ENCODE measurements at regions of chr1 and their contacts with region 1.

Region 1: GRCh38 chr1:155308493-155309422 is at the start of gene FDPS:
- DNase-seq: peak; percentile 99
- H3K4me3 Mint-ChIP-seq: peak within 1 kb of the TSS; percentile 96
- H3K27ac Mint-ChIP-seq: peak within 1 kb of the TSS; percentile 99
- H3K4me1 Mint-ChIP-seq: peaks cover 35% of the 10 kb centered on the region
- H3K27me3 Mint-ChIP-seq: no peaks in the 10 kb centered on the region
- total RNA-seq, gene FDPS: 332 to 333 TPM

Region 2: GRCh38 chr1:155172732-155173477 is 135.9 kb before region 1 on chr1 and contains the start of gene KRTCAP2:
- CTCF ChIA-PET with region 1: no interaction called
- intact Hi-C with region 1: loop called (anchors 5 kb)
- DNase-seq: peak; percentile 98
- H3K4me3 Mint-ChIP-seq: peak within 1 kb of the TSS; percentile 93
- H3K27ac Mint-ChIP-seq: peak within 1 kb of the TSS; percentile 97
- H3K4me1 Mint-ChIP-seq: peaks cover 46% of the 10 kb centered on the region
- H3K27me3 Mint-ChIP-seq: no peaks in the 10 kb centered on the region
- total RNA-seq, gene KRTCAP2: 129 to 137 TPM

Region 3: DNA sequence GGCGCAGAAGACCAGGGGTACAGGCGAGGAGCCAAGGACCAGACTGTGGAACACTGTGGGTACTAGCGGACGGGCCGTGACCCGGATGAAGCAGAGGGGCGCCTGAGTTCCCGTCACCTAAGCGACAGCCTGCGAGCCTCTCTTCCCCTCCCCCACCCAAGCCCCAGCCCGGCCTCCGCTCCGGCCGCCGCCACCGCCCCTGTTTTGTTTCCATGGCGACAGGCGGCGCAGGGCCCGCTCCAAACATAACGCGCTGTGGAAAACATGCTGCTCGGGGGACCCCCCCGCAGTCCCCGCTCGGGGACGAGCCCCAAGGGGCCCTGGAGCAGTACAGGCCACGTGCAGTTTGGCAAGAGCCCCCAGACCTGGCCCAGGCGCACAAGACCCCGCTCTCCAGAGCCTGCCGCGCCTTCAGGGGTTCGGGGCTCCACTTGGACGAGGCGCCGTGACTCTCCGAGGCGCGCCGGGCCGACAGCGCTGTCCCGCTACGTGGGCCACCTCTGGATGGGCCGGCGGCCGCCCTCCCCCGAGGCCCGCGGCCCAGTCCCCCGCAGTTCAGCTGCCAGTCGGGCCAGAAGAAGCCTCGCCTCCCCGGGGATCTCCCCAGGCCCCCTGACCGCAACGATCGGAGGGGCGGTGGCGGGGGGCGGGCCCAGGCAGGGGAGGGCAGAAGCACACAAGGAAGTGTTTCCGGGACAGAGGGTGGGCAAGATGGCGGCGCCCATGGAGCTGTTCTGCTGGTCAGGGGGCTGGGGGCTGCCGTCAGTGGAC is 100.0 kb before region 1 on chr1 and contains the start of gene MTX1:
- CTCF ChIA-PET with region 1: interaction called, 4 read pairs
- intact Hi-C with region 1: loop called (anchors 2 kb)
- DNase-seq: peak; percentile 89
- H3K4me3 Mint-ChIP-seq: peak within 1 kb of the TSS; percentile 88
- H3K27ac Mint-ChIP-seq: peak within 1 kb of the TSS; percentile 71
- H3K4me1 Mint-ChIP-seq: peaks cover 29% of the 10 kb centered on the region
- H3K27me3 Mint-ChIP-seq: no peaks in the 10 kb centered on the region
- total RNA-seq, gene MTX1: 46.8 to 47.4 TPM

Region 4: DNA sequence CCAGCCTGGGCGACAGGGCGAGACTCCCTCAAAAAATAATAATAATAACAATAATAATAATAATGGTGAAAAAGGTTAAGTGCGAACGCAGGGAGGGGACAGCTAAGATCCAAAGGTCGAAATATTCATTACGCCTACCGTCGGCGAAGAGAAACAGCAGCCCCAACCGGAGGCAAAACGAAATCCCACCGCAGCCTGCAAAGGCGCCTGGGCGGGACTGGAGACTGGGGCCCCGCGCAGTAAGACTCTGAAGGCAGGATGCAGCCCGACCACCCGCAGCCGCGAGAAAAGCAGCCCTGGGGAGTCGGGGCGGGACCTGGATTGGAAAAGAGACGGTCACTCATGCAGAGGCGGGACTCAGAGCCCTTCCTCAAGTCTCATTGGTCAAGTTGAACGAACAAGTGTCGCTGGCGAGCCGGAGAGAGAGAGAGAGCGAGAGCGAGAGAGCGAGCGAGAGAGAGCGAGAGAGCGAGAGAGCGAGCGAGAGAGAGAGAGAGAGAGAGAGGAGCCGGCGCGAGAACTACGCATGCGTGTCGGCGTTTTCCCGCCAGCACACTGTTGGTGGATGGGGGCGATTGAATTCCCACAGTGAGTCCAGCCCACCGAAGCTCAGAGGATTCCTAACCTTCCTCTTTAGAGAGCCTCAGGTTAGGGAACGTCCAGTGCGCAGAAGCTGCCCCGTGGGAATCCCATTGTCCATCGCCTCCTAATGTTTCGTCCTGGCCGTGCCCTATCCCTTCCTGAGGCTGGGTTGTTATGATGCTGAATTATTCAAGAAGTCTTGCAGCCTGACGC is 64.2 kb before region 1 on chr1:
- CTCF ChIA-PET with region 1: interaction called, 12 read pairs
- intact Hi-C with region 1: loop called (anchors 1 kb)
- DNase-seq: peak; percentile 99
- H3K4me3 Mint-ChIP-seq: peak overlapping the region; percentile 88
- H3K27ac Mint-ChIP-seq: peak overlapping the region; percentile 98
- H3K4me1 Mint-ChIP-seq: peaks cover 40% of the 10 kb centered on the region
- H3K27me3 Mint-ChIP-seq: peaks cover 2% of the 10 kb centered on the region

Region 5: DNA sequence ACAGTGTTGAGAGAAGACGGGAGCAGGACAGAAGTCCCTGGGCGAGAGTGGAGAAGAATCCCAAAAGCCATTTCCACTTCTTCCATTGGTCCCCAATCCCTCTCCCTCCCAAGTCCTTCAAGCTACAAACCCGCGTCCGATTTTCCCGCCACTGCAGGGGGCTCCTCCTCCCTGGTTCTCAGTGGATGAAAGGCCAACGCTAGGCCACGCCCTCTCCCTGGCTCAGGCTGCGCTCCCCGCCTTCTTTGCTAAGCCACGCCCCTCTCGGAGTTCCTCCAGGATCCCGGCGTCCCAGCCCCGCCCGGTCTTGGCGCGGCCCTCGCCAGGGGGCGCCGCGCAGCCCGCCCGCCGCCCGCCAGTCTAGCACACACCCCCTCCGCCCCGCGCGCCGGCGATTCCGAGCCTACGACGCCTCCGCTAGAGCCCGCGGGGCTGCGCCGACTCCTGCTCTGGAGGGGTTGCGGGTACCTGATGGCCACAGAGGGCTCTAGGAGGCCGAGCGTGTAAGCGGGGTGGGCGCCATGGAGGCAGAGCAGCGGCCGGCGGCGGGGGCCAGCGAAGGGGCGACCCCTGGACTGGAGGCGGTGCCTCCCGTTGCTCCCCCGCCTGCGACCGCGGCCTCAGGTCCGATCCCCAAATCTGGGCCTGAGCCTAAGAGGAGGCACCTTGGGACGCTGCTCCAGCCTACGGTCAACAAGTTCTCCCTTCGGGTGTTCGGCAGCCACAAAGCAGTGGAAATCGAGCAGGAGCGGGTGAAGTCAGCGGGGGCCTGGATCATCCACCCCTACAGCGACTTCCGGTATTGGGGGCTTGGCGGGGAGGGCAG is 31.5 kb before region 1 on chr1 and contains the start of gene HCN3:
- CTCF ChIA-PET with region 1: interaction called, 3 read pairs
- intact Hi-C with region 1: loop called (anchors 1 kb)
- DNase-seq: peak; percentile 96
- H3K4me3 Mint-ChIP-seq: peak within 1 kb of the TSS; percentile 62
- H3K27ac Mint-ChIP-seq: no peak within 1 kb of the TSS
- H3K4me1 Mint-ChIP-seq: peaks cover 30% of the 10 kb centered on the region
- H3K27me3 Mint-ChIP-seq: no peaks in the 10 kb centered on the region
- total RNA-seq, gene HCN3: 0.79 to 1.6 TPM

Region 6: DNA sequence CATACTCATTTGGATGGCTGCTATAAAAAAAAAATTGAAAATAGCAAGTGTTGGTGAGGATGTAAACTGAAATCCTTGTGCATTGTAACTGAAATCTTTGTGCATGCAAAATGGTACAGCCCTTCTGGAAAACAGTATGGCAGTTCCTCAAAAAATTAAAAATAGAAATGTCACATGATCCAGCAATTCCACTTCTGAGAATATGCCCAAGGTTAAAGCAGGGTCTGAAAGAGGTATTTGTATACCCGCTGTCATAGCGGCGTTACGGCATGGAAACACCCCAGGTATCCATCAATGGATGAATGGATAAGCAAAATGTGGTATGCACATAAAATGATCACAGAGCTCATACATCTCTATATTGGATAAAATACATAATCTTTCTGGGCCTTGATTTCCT is 128.6 kb after region 1 on chr1:
- CTCF ChIA-PET with region 1: no interaction called
- intact Hi-C with region 1: no loop called
- DNase-seq: no peak
- H3K4me3 Mint-ChIP-seq: no peak overlapping the region
- H3K27ac Mint-ChIP-seq: no peak overlapping the region
- H3K4me1 Mint-ChIP-seq: peaks cover 5% of the 10 kb centered on the region
- H3K27me3 Mint-ChIP-seq: no peaks in the 10 kb centered on the region

Region 7: DNA sequence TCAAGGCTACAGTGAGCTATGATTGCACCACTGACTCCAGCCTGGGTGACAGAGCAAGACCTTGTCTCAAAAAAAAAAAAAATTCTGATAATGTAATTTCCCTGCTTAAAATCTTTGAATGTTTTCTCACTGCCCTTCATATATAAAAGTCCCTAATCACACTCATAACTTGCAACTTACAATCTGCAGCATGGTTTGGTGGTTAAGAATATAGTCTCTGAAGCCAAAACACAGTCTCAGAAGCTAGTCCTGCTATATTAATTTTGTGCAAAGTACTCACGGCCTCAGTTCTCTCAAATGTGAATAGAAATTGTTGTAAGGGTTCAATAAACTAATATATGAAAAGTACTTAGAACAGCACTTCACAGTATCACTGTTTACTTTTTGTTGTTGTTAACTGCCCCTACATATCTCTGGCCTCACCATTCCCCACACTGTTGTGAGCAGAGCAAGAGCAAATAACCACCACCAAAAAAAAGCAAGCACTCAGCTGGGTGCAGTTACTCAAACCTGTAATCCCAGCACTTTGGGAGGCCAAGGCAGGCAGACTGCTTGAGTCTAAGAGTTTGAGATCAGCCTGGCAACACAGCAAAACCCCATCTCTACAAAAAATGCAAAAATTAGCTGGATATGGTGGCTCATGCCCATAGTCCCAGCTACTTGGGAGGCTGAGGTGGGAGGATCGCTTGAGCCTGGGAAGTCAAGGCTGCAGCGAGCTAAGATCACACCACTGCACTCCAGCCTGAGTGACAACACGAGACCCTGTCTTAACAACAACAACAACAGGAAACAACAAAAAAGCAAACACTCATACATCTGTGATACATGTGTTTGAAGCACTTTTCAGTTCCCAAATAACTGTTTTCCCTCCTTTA is 231.5 kb after region 1 on chr1:
- CTCF ChIA-PET with region 1: interaction called, 4 read pairs
- intact Hi-C with region 1: loop called (anchors 1 kb)
- DNase-seq: no peak
- H3K4me3 Mint-ChIP-seq: no peak overlapping the region
- H3K27ac Mint-ChIP-seq: peak overlapping the region; percentile 60
- H3K4me1 Mint-ChIP-seq: peaks cover 64% of the 10 kb centered on the region
- H3K27me3 Mint-ChIP-seq: no peaks in the 10 kb centered on the region

Region 8: DNA sequence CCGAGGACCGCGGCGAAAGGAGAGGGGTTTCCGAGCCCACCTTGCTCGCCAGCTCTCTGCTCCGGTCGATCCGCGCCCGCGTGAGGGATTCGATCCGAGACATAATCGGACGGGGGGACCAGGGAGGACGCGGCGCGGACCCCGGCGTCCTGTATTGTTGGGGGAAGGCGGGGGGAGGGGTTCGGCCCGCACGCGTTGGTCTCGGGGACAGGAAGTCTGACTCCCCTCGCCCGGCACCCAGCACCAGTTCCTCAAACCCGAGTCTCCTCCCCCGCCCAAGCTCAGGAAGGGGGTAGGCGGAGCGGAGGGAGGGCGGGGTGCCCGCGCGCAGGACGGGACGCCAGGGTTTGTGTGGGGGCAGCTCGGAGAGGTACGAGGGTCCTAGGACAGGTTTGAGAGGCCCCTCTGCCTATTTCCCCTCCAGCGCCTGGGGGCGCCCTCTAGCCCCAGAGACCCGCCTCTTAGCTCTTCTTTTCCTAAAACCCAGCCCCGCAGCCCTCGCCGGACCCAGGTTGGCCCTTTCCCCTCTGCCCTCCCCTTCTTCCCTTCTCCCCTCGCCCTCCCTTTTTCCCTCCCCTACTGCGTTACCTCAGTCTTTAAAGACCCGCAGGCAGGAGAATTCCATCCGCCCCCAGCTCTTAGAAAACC is 669.7 kb after region 1 on chr1 and contains the start of gene ARHGEF2:
- CTCF ChIA-PET with region 1: no interaction called
- intact Hi-C with region 1: loop called (anchors 1 kb)
- DNase-seq: peak; percentile 87
- H3K4me3 Mint-ChIP-seq: peak within 1 kb of the TSS; percentile 98
- H3K27ac Mint-ChIP-seq: peak within 1 kb of the TSS; percentile 99
- H3K4me1 Mint-ChIP-seq: peaks cover 64% of the 10 kb centered on the region
- H3K27me3 Mint-ChIP-seq: no peaks in the 10 kb centered on the region
- total RNA-seq, gene ARHGEF2: 154 to 159 TPM

Measured in activated naive CD4-positive, alpha-beta T cell treated with anti-CD3 and anti-CD28 coated beads for 36 hours (primary cell).